ENCODE measurements at regions of chr9 and their contacts with region 1.

Region 1: GRCh38 chr9:123231421-123231820 is 37.0 kb downstream of the STRBP start:
- DNase-seq: no peak
- H3K4me3 ChIP-seq: no peak overlapping the region
- H3K27ac ChIP-seq: no peak overlapping the region
- H3K4me1 ChIP-seq: no peaks in the 10 kb centered on the region
- H3K27me3 ChIP-seq: no peaks in the 10 kb centered on the region
- CTCF ChIP-seq: no peak
- POLR2A ChIP-seq: no peak

Region 2: DNA sequence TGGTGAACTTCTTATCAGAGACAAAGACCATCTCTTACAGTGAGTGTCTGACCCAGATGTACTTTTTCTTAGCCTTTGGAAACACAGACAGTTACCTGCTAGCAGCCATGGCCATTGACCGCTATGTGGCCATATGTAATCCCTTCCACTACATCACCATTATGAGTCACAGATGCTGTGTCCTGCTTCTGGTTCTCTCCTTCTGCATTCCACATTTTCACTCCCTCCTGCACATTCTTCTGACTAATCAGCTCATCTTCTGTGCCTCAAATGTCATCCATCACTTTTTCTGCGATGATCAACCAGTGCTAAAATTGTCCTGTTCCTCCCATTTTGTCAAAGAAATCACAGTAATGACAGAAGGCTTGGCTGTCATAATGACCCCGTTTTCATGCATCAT is 569.5 kb before region 1 on chr9:
- intact Hi-C with region 1: no loop called
- DNase-seq: no peak
- H3K4me3 ChIP-seq: no peak overlapping the region
- H3K27ac ChIP-seq: no peak overlapping the region
- H3K4me1 ChIP-seq: no peaks in the 10 kb centered on the region
- H3K27me3 ChIP-seq: no peaks in the 10 kb centered on the region
- CTCF ChIP-seq: no peak
- POLR2A ChIP-seq: no peak

Region 3: GRCh38 chr9:123268240-123268949 is 37.0 kb after region 1 on chr9 and contains the start of gene STRBP:
- intact Hi-C with region 1: no loop called
- DNase-seq: no peak
- H3K4me3 ChIP-seq: peak within 1 kb of the TSS; percentile 74 to 78
- H3K27ac ChIP-seq: peak within 1 kb of the TSS; percentile 31
- H3K4me1 ChIP-seq: peaks cover 15% of the 10 kb centered on the region
- H3K27me3 ChIP-seq: no peaks in the 10 kb centered on the region
- CTCF ChIP-seq: no peak
- POLR2A ChIP-seq: no peak
- total RNA-seq, gene STRBP: 9.1 TPM

Region 4: GRCh38 chr9:123318202-123318601 is 86.8 kb after region 1 on chr9:
- intact Hi-C with region 1: loop called (anchors 2 kb)
- DNase-seq: no peak
- H3K4me3 ChIP-seq: no peak overlapping the region
- H3K27ac ChIP-seq: no peak overlapping the region
- H3K4me1 ChIP-seq: peaks cover 8% of the 10 kb centered on the region
- H3K27me3 ChIP-seq: no peaks in the 10 kb centered on the region
- CTCF ChIP-seq: no peak
- POLR2A ChIP-seq: no peak

Region 5: GRCh38 chr9:123536455-123536868 is 305.0 kb after region 1 on chr9:
- intact Hi-C with region 1: no loop called
- DNase-seq: no peak
- H3K4me3 ChIP-seq: no peak overlapping the region
- H3K27ac ChIP-seq: no peak overlapping the region
- H3K4me1 ChIP-seq: no peaks in the 10 kb centered on the region
- H3K27me3 ChIP-seq: no peaks in the 10 kb centered on the region
- CTCF ChIP-seq: no peak
- POLR2A ChIP-seq: no peak

Region 6: DNA sequence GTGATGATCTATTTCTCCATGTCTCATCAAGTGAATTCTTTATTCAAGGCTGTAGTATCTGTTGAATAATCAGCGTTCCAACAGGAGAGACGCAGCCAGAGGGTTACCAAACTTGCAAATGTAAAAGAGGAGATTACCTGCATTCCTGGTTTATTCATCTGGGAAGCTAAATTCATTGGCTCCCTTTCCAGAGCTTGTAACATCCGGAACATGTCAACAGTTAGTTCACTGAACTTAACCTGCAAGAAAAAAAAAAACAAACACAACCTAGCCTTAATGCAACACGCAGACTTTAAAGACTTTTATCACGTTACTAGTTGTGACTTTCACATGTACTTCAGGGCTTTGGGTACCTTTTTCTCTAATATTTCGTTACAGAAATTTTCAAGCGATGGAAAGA is 1771.9 kb after region 1 on chr9:
- intact Hi-C with region 1: no loop called
- DNase-seq: no peak
- H3K4me3 ChIP-seq: no peak overlapping the region
- H3K27ac ChIP-seq: no peak overlapping the region
- H3K4me1 ChIP-seq: no peaks in the 10 kb centered on the region
- H3K27me3 ChIP-seq: no peaks in the 10 kb centered on the region
- CTCF ChIP-seq: no peak
- POLR2A ChIP-seq: no peak